ENCODE measurements at regions of chr6 and their contacts with region 1.

Region 1: DNA sequence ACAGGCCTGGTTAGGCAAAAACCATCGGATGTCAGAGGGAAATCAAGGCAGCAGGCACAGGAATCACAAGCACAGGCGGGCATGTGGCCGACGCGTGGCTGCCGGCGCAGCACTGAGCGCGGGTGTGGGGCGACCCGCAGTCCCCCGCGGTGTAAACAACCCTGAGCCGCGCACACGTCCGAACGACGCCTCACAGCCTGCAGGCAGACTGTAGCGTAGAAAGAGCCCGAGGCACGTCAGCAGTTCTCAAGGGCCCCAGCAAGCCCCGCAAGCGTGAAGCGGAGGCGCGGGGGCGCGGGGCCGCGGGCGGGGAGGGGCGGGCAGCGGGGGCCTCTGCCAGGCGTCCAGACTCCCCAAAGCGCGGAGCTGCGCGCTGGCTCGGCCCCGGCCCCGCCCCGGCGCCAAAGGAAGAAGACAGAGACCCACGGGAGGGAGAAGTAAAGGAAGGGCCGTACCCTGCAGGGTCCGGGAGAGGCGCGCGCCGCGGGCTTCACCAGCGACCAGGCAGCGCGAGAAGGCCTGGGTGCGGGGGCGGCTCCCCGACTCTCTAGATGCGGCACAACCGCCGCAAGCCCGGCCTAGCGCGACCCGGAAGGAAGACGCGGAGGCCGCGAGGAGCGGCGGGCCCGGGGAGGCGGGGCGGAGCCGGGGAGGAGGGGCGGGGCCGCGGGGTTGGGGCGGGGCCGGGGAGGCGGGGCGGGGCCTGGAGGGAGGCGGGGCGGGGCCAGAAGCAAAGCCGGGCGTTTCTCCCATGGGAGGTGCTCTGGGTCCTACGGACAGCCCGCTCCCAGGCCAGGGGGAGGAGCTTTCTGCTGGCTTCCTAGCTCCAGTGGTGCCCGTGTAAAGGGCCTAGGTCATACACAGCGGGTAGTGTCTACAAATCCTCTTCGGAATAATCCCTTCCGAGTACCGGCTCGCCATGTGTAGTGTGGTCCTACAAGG is at the start of gene FBXL4:
- DNase-seq: peak; percentile 77
- ATAC-seq: peak; percentile 86
- H3K4me3 Mint-ChIP-seq: peak within 1 kb of the TSS; percentile 91
- H3K27ac Mint-ChIP-seq: peak within 1 kb of the TSS; percentile 86
- H3K4me1 Mint-ChIP-seq: peaks cover 35% of the 10 kb centered on the region
- H3K27me3 Mint-ChIP-seq: no peaks in the 10 kb centered on the region
- CTCF ChIP-seq: no peak
- total RNA-seq, gene FBXL4: 10.2 and 10.8 TPM in 2 replicates

Region 2: GRCh38 chr6:97669191-97670031 is 1278.2 kb before region 1 on chr6:
- CTCF ChIA-PET with region 1: no interaction called
- POLR2A ChIA-PET with region 1: no interaction called
- intact Hi-C with region 1: loop called (anchors 5 kb)
- DNase-seq: peak; percentile 28
- ATAC-seq: peak; percentile 95
- H3K4me3 Mint-ChIP-seq: no peak overlapping the region
- H3K27ac Mint-ChIP-seq: no peak overlapping the region
- H3K4me1 Mint-ChIP-seq: no peaks in the 10 kb centered on the region
- H3K27me3 Mint-ChIP-seq: no peaks in the 10 kb centered on the region
- CTCF ChIP-seq: no peak

Region 3: GRCh38 chr6:98845211-98846020 is 102.2 kb before region 1 on chr6:
- CTCF ChIA-PET with region 1: no interaction called
- POLR2A ChIA-PET with region 1: no interaction called
- intact Hi-C with region 1: loop called (anchors 5 kb)
- DNase-seq: peak; percentile 60
- ATAC-seq: peak; percentile 77
- H3K4me3 Mint-ChIP-seq: peak overlapping the region; percentile 74
- H3K27ac Mint-ChIP-seq: no peak overlapping the region
- H3K4me1 Mint-ChIP-seq: peaks cover 30% of the 10 kb centered on the region
- H3K27me3 Mint-ChIP-seq: peaks cover 78% of the 10 kb centered on the region
- CTCF ChIP-seq: peak; percentile 48

Region 4: GRCh38 chr6:99425647-99426453 is 478.2 kb after region 1 on chr6:
- CTCF ChIA-PET with region 1: no interaction called
- POLR2A ChIA-PET with region 1: no interaction called
- intact Hi-C with region 1: loop called (anchors 10 kb)
- DNase-seq: peak; percentile 56
- ATAC-seq: peak; percentile 54
- H3K4me3 Mint-ChIP-seq: peak overlapping the region; percentile 99
- H3K27ac Mint-ChIP-seq: peak overlapping the region; percentile 100
- H3K4me1 Mint-ChIP-seq: peaks cover 52% of the 10 kb centered on the region
- H3K27me3 Mint-ChIP-seq: no peaks in the 10 kb centered on the region
- CTCF ChIP-seq: no peak

Region 5: DNA sequence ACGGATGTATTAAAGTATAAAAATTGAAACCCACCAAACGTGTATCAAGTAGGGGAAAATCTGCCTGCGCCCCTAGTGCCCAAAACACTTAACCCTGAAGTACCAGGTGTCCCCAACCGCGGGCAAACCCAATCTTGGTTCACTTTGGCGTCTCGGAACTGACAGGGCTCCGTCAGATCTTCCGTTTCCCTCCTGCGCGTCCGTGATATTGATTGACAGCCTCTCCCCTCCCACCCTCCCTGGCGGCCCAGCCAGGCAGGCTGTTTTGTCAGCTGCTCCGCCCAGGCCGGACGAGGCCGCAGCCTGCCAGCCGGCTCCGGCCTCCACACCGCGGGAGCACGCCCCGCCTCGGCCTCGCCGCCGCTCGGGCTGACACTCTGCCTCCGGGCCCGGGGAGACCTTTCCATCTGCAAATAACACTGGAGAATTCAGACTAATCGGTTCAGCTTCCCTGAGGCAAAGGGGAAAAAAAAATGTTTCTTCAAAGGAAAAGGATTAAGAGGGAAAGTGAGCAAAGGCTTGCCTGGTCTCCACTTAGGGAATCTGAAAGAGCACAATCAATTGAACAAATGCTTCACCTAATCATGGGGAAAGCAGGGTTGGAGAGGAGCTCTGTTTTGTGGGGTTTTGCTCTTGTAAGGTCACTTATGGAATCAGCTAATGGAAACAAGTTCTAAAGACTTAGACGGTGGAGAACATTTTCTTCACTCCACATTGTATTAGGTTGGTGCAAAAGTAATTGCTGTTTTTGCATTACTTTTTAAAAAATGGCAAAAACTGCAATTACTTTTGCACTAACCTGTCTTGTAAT is 1281.4 kb after region 1 on chr6:
- CTCF ChIA-PET with region 1: no interaction called
- POLR2A ChIA-PET with region 1: no interaction called
- intact Hi-C with region 1: loop called (anchors 10 kb)
- DNase-seq: peak; percentile 29
- ATAC-seq: peak; percentile 91
- H3K4me3 Mint-ChIP-seq: peak overlapping the region; percentile 81
- H3K27ac Mint-ChIP-seq: peak overlapping the region; percentile 41
- H3K4me1 Mint-ChIP-seq: peaks cover 13% of the 10 kb centered on the region
- H3K27me3 Mint-ChIP-seq: no peaks in the 10 kb centered on the region
- CTCF ChIP-seq: no peak

Measured in activated B cell treated with CpG ODN at 0.5 μM for 24 hours (primary cell).